CD8-positive, alpha-beta T cell (primary cell): ENCODE measurements at regions of chr18 and their contacts with region 1.

Region 1: DNA sequence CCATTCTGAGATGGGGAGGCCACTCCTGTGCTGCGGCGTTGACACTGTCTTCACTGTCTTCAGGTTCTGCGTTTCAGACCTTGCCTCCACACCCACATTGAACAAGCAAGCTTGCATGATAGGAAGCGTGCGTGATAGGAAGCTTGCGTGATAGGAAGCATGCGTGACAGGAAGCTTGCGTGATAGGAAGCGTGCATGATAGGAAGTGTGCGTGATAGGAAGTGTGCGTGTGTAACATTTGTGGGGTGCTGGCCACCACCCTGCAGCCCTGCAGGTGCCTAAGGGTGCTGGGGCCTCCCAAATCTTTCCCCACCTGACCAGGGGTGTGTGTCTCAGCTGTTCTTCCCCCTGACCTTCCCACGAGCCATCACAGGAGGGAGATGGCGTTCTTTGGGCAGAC is 25.3 kb downstream of the TSHZ1 start:
- DNase-seq: no peak
- ATAC-seq: no peak
- H3K4me3 ChIP-seq: no peak overlapping the region
- H3K4me3 Mint-ChIP-seq: no peak overlapping the region
- H3K27ac ChIP-seq: no peak overlapping the region
- H3K27ac Mint-ChIP-seq: no peak overlapping the region
- H3K4me1 ChIP-seq: no peaks in the 10 kb centered on the region
- H3K4me1 Mint-ChIP-seq: peaks cover 43% of the 10 kb centered on the region
- H3K27me3 ChIP-seq: no peaks in the 10 kb centered on the region
- H3K27me3 Mint-ChIP-seq: no peaks in the 10 kb centered on the region
- CTCF ChIP-seq: no peak

Region 2: DNA sequence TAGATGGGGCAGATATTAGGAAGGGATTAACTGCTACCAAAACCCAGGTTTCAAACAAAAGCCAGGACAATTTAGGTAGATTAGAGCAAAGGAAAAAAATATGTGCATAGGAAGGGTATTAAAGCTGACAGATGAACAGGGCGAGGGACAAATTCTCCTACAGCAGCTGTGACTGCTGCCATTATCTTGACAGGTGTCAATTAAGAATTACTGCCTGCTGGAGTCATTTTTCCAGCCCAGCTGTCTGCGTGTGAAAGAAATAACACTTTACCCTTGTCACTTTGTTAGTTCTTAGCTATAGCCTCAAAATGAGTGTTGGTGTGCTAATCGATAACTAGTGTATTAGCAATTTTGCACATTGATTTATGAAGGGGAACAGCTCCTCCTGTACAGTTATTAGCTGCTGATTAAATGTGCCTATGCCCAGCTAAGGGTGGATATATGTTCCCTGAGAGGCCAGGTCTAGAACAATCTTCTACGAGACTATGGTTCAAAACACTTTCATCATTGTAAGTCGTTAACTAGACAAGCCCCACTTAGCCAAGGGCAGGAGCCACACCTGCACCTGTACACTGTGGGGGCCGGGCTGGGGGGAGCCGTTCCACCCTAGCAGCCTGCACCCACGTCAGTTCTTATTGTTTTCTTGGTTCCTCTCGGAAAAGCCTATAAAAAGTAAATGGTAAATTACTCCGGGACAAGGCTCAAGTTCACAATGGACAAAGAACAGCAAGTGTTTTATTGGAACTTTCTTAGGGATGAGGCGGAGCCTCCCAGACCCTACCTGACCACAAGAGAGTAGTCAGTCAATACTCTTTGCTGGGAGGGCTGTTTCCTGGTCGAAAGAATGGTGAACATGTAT is 17.6 kb before region 1 on chr18:
- CTCF ChIA-PET with region 1: interaction called, 3 read pairs
- POLR2A ChIA-PET with region 1: no interaction called
- intact Hi-C with region 1: loop called in 1 of 2 experiments (anchors 2 kb)
- DNase-seq: no peak
- ATAC-seq: no peak
- H3K4me3 ChIP-seq: no peak overlapping the region
- H3K4me3 Mint-ChIP-seq: no peak overlapping the region
- H3K27ac ChIP-seq: peak overlapping the region in 1 of 2 experiments; percentile 89
- H3K27ac Mint-ChIP-seq: peak overlapping the region; percentile 30
- H3K4me1 ChIP-seq: peaks cover 56% of the 10 kb centered on the region
- H3K4me1 Mint-ChIP-seq: peaks cover 86% of the 10 kb centered on the region
- H3K27me3 ChIP-seq: no peaks in the 10 kb centered on the region
- H3K27me3 Mint-ChIP-seq: no peaks in the 10 kb centered on the region
- CTCF ChIP-seq: no peak